GM23248 (cell line): ENCODE measurements at regions of chr4 and their contacts with region 1.

Region 1: DNA sequence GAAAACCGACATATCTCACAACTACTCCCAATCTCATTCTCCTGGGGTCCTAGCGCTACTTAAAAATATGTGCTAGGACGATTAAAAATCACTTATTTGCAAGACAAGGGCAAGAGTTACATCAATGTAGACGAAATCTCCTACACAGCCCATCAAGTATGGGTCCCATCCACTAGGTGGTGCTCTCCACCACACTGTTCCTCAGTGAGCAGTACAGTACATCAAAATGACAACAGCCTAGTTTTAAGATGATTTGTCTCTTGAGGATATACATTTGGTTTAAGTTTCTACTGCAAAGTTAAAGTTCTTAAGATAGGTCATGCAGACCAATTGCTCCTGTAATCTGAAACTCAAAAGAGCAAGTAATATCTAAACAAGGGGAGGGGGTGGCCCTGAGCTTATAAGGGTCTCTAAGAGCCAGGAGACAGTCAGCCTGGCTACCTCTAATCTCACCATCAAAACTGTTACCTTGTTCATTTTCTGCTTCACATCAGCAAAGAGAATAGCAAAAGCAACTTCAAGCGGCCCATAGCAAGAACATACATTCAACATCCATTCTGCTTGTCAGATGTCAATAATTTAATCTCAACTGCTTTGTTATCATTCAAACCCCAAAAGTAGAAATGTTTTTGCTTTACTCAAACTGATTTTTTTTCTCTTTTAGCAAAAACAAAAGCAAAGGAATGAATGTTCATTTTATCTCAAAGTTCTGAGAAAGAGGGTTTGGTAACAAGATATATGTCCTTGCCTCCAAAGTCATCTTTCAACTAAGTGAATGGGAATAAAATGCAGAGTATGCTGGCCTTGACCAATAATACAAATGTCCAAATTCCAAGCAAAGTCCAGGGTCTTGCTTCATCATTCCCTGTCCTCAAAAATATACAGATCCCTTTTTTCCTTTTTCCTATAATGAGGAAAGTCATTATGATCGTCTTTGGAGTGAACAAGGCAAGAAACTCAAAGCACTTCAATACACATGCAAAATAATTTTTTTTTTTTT is 53.1 kb downstream of the STX18 start:
- DNase-seq: peak; percentile 84
- H3K4me3 ChIP-seq: no peak overlapping the region
- H3K27ac ChIP-seq: no peak overlapping the region
- H3K4me1 ChIP-seq: peaks cover 34% of the 10 kb centered on the region
- H3K27me3 ChIP-seq: no peaks in the 10 kb centered on the region

Region 2: DNA sequence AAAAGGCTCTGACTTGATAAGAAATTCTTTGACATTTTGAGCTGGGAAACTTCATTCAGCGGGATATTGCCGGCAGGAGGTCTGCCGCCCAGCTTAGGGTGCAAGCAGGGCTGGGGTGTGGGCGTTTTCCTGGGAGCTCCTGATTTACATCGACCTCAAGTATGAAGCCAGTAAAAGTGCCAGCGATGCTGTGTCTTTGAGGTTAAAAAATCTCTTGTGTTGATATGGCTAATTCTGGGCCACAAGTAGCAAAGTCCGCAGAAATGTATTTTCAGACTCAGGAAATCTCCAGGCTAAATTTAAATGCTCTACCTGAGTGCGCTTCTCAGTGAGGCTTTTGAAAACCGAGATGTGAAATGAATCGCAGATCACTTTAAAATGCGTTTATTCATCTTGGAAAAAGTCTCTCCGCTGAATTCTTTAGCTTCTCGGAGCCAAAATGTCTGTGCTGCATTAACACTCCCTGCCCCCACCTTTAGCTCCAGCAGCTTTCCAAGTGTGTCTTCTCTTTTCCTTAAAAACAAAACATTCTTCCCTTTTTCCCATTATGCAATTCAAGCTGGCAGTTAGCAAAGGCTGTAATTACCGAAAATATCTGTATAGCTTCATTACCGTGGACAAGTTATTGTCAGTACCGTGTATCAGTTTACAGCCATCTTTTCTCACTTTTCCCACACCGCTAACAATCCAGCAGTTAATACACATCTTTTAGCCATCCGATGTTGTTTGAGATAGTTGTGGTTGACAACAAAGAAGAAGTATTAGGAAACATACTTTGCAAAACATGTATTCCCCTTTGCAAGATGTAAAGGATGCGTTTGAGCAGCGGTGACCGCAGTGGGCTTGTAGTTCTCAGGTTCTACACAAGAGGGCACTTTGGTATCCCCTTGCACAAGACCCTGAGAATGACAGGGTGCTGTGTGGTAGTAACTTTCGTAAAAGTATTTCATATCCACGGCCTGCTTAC is 189.1 kb after region 1 on chr4:
- in situ Hi-C with region 1: loop called (anchors 10 kb)
- DNase-seq: peak; percentile 83
- H3K4me3 ChIP-seq: peak overlapping the region; percentile 68
- H3K27ac ChIP-seq: peak overlapping the region; percentile 51
- H3K4me1 ChIP-seq: peaks cover 21% of the 10 kb centered on the region
- H3K27me3 ChIP-seq: no peaks in the 10 kb centered on the region

Region 3: GRCh38 chr4:4791299-4792111 is 302.8 kb after region 1 on chr4:
- in situ Hi-C with region 1: no loop called
- DNase-seq: peak; percentile 75
- H3K4me3 ChIP-seq: no peak overlapping the region; the same call in 1 of the 2 replicates
- H3K27ac ChIP-seq: peak overlapping the region; percentile 92
- H3K4me1 ChIP-seq: peaks cover 32% of the 10 kb centered on the region
- H3K27me3 ChIP-seq: no peaks in the 10 kb centered on the region

Region 4: GRCh38 chr4:4859843-4860802 is 371.4 kb after region 1 on chr4:
- in situ Hi-C with region 1: loop called (anchors 10 kb)
- DNase-seq: peak; percentile 66
- H3K4me3 ChIP-seq: peak overlapping the region; percentile 84
- H3K27ac ChIP-seq: peak overlapping the region; percentile 44
- H3K4me1 ChIP-seq: peaks cover 4% of the 10 kb centered on the region; the same call in 1 of the 2 replicates
- H3K27me3 ChIP-seq: no peaks in the 10 kb centered on the region

Region 5: GRCh38 chr4:4995103-4995907 is 506.6 kb after region 1 on chr4:
- in situ Hi-C with region 1: loop called (anchors 25 kb)
- DNase-seq: peak; percentile 78
- H3K4me3 ChIP-seq: no peak overlapping the region
- H3K27ac ChIP-seq: no peak overlapping the region
- H3K4me1 ChIP-seq: peaks cover 26% of the 10 kb centered on the region
- H3K27me3 ChIP-seq: peaks cover 21% of the 10 kb centered on the region

Region 6: DNA sequence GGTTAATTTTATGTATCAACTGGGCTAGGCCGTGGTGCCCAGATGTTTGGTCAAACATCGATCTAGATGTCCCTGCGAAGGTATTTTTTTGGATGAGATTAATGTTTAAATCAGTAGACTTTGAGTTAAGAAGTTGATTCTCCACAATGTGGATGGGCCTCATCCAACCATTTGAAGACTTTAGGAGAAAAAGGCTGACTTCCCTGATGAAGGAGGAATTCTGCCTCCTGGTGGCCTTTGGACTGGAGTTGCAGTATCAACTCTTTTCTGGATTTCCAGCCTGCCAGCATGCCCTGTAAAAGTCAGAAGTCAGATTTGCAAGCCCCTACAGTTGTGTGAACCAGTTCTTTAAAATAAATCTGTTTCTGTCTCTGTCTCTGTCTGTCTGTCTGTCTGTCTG is 654.0 kb after region 1 on chr4:
- in situ Hi-C with region 1: loop called (anchors 25 kb)
- DNase-seq: peak; percentile 75
- H3K4me3 ChIP-seq: no peak overlapping the region
- H3K27ac ChIP-seq: no peak overlapping the region
- H3K4me1 ChIP-seq: no peaks in the 10 kb centered on the region
- H3K27me3 ChIP-seq: 0 out of 2 replicates have a peak, but pooled peaks cover under 1% of the 10 kb centered on the region